CD4-positive, alpha-beta T cell (primary cell): ENCODE measurements at regions of chr6 and their contacts with region 1.

Region 1: GRCh38 chr6:31971993-31972708 is at the start of gene DXO:
- DNase-seq: peak; percentile 87 to 99 (median 95)
- ATAC-seq: peak; percentile 91
- H3K4me3 ChIP-seq: peak within 1 kb of the TSS; percentile 84
- H3K4me3 Mint-ChIP-seq: peak within 1 kb of the TSS; percentile 100
- H3K27ac ChIP-seq: peak within 1 kb of the TSS; percentile 99 to 100
- H3K27ac Mint-ChIP-seq: peak within 1 kb of the TSS; percentile 100
- H3K4me1 ChIP-seq: peaks cover 32% of the 10 kb centered on the region
- H3K4me1 Mint-ChIP-seq: peaks cover 34% of the 10 kb centered on the region
- H3K27me3 ChIP-seq: no peaks in the 10 kb centered on the region
- H3K27me3 Mint-ChIP-seq: peaks cover 6% of the 10 kb centered on the region
- CTCF ChIP-seq: no peak
- total RNA-seq, gene DXO: 30.0 to 31.1 TPM

Region 2: DNA sequence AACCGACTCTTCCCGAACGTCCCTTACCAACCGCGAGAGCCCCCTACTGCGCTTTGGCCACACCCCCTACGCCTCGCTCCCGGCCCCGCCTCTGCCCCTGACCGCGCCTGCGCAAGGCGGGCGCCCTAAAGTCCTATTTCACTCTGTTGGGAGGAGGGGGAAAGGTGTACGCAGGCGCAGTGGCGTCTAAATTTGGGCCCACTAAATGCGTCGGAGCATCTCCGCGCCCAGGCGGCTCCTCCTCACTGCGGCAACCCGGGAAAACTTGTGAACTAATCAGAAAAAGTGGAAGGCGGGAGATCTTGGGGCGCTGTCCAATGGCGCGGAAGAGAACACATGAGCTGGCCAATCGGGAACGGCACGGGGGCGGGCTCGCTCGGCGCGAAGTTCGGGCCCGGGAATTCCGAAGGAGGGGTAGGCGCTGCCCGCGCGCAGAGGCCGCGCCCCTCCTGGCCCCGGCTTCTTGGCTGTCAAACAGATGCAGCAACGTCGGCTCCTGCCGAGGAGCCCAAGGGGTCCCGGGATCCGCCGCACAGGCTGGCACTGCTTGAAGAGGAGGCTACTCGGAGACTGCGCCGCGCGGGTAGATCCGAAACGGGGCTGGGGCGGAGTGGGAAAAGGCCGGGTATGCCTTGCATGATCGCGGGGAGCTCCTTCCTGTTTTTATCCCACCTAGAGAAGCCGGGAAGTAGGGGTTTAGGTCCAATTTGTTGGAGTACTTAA is 813.9 kb before region 1 on chr6 and contains the start of gene TCF19:
- CTCF ChIA-PET with region 1: no interaction called
- POLR2A ChIA-PET with region 1: no interaction called
- intact Hi-C with region 1: loop called in 1 of 2 experiments (anchors 10 kb)
- DNase-seq: peak; percentile 98 to 100 (median 99)
- ATAC-seq: peak; percentile 90
- H3K4me3 ChIP-seq: peak within 1 kb of the TSS; percentile 96
- H3K4me3 Mint-ChIP-seq: peak within 1 kb of the TSS; percentile 97
- H3K27ac ChIP-seq: peak within 1 kb of the TSS; percentile 38 to 40
- H3K27ac Mint-ChIP-seq: peak within 1 kb of the TSS; percentile 77
- H3K4me1 ChIP-seq: peaks cover 26% of the 10 kb centered on the region
- H3K4me1 Mint-ChIP-seq: peaks cover 33% of the 10 kb centered on the region
- H3K27me3 ChIP-seq: no peaks in the 10 kb centered on the region
- H3K27me3 Mint-ChIP-seq: no peaks in the 10 kb centered on the region
- CTCF ChIP-seq: no peak
- total RNA-seq, gene TCF19: 3.3 to 4.1 TPM

Region 3: GRCh38 chr6:31901953-31902643 is 70.1 kb before region 1 on chr6 and contains the start of gene ZBTB12:
- CTCF ChIA-PET with region 1: interaction called, 4 read pairs
- POLR2A ChIA-PET with region 1: interaction called, 11 read pairs
- intact Hi-C with region 1: no loop called
- DNase-seq: peak; percentile 67 to 94 (median 84)
- ATAC-seq: peak; percentile 48
- H3K4me3 ChIP-seq: peak within 1 kb of the TSS; percentile 68
- H3K4me3 Mint-ChIP-seq: peak within 1 kb of the TSS; percentile 89
- H3K27ac ChIP-seq: peak within 1 kb of the TSS; percentile 13 to 72
- H3K27ac Mint-ChIP-seq: peak within 1 kb of the TSS; percentile 65
- H3K4me1 ChIP-seq: peaks cover 39% of the 10 kb centered on the region
- H3K4me1 Mint-ChIP-seq: peaks cover 35% of the 10 kb centered on the region
- H3K27me3 ChIP-seq: no peaks in the 10 kb centered on the region
- H3K27me3 Mint-ChIP-seq: no peaks in the 10 kb centered on the region
- CTCF ChIP-seq: no peak
- total RNA-seq, gene ZBTB12: 0.28 to 0.33 TPM

Region 4: GRCh38 chr6:31958741-31959739 is 13.1 kb before region 1 on chr6 and contains the starts of genes NELFE and SKIC2:
- CTCF ChIA-PET with region 1: no interaction called
- POLR2A ChIA-PET with region 1: interaction called, 102 read pairs
- intact Hi-C with region 1: loop called (anchors 1 kb)
- DNase-seq: peak; percentile 96 to 100 (median 98)
- ATAC-seq: peak; percentile 97
- H3K4me3 ChIP-seq: peak within 1 kb of the TSS; percentile 97
- H3K4me3 Mint-ChIP-seq: peak within 1 kb of the TSS; percentile 96
- H3K27ac ChIP-seq: peak within 1 kb of the TSS; percentile 94 to 96
- H3K27ac Mint-ChIP-seq: peak within 1 kb of the TSS; percentile 97
- H3K4me1 ChIP-seq: peaks cover 30% of the 10 kb centered on the region
- H3K4me1 Mint-ChIP-seq: peaks cover 38% of the 10 kb centered on the region
- H3K27me3 ChIP-seq: no peaks in the 10 kb centered on the region
- H3K27me3 Mint-ChIP-seq: no peaks in the 10 kb centered on the region
- CTCF ChIP-seq: no peak
- total RNA-seq, gene NELFE: 53.8 to 58.2 TPM
- total RNA-seq, gene SKIC2: 133 to 141 TPM

Region 5: GRCh38 chr6:32120573-32121059 is 148.5 kb after region 1 on chr6:
- CTCF ChIA-PET with region 1: no interaction called
- POLR2A ChIA-PET with region 1: no interaction called
- intact Hi-C with region 1: no loop called
- DNase-seq: no peak
- ATAC-seq: no peak
- H3K4me3 ChIP-seq: no peak overlapping the region
- H3K4me3 Mint-ChIP-seq: no peak overlapping the region
- H3K27ac ChIP-seq: no peak overlapping the region
- H3K27ac Mint-ChIP-seq: no peak overlapping the region
- H3K4me1 ChIP-seq: peaks cover 10% of the 10 kb centered on the region
- H3K4me1 Mint-ChIP-seq: peaks cover 21% of the 10 kb centered on the region
- H3K27me3 ChIP-seq: no peaks in the 10 kb centered on the region
- H3K27me3 Mint-ChIP-seq: no peaks in the 10 kb centered on the region
- CTCF ChIP-seq: no peak